ENCODE measurements at regions of chr3 and their contacts with region 1.

Region 1: GRCh38 chr3:105798381-105798934 is 70.4 kb downstream of the CBLB start:
- DNase-seq: no peak
- ATAC-seq: peak; percentile 77
- H3K4me3 Mint-ChIP-seq: peak overlapping the region; percentile 55
- H3K27ac Mint-ChIP-seq: peak overlapping the region; percentile 81
- H3K4me1 Mint-ChIP-seq: peaks cover 73% of the 10 kb centered on the region
- H3K27me3 Mint-ChIP-seq: no peaks in the 10 kb centered on the region
- CTCF ChIP-seq: no peak

Region 2: DNA sequence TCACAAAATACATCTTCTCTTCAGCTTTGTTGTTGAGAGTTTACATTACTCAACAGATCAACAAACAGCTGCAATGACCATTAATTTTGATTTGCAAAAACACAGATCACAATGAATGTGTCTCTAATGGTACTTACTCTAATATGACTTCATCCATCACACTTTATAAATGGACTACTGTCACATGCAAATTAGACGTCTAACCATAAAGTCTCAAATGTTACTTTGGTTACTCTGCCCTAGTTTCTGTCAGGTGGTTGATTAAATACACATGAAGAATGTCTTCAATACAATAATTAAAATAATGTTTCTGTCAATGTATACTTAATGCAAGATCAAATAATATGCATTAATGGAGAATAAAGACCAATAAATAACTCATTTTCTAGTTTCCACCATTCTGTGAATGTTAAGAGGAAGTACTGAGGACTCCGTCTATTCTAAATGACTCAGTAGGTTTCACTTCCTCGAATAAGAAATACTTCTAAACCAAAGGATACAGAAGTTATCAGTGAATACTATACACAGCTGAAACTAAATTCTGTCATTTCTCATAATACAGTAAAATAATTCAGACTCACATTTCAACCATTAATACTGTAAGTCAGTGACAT is 75.4 kb before region 1 on chr3:
- CTCF ChIA-PET with region 1: no interaction called
- POLR2A ChIA-PET with region 1: no interaction called
- intact Hi-C with region 1: loop called (anchors 1 kb)
- DNase-seq: no peak
- ATAC-seq: peak; percentile 93
- H3K4me3 Mint-ChIP-seq: peak overlapping the region; percentile 66
- H3K27ac Mint-ChIP-seq: peak overlapping the region; percentile 88
- H3K4me1 Mint-ChIP-seq: peaks cover 19% of the 10 kb centered on the region
- H3K27me3 Mint-ChIP-seq: no peaks in the 10 kb centered on the region
- CTCF ChIP-seq: no peak

Region 3: DNA sequence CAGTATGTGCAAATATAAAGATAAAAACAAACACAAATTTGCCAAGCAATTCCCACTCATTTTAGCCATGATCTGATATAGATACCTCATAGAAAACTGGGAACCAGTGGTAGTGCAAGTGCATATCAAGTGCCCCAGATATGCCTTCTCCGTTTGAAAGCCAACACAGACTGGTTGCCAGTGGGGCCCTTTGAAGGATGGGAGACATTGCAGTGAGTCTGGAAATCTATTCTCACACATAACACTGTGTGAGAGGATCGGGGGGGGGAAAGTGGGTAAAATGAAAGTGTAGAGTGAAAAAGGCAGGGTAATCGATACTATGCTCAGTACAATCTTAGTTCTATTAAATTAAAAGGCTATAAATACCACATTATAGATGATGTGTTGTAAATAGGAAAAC is 12.7 kb before region 1 on chr3:
- CTCF ChIA-PET with region 1: no interaction called
- POLR2A ChIA-PET with region 1: interaction called, 4 read pairs
- intact Hi-C with region 1: loop called (anchors 2 kb)
- DNase-seq: no peak
- ATAC-seq: no peak
- H3K4me3 Mint-ChIP-seq: no peak overlapping the region
- H3K27ac Mint-ChIP-seq: no peak overlapping the region
- H3K4me1 Mint-ChIP-seq: peaks cover 20% of the 10 kb centered on the region
- H3K27me3 Mint-ChIP-seq: no peaks in the 10 kb centered on the region
- CTCF ChIP-seq: no peak

Region 4: GRCh38 chr3:105836533-105836932 is 38.1 kb after region 1 on chr3:
- CTCF ChIA-PET with region 1: interaction called, 5 read pairs
- POLR2A ChIA-PET with region 1: interaction called, 22 read pairs
- intact Hi-C with region 1: loop called (anchors 1 kb)
- DNase-seq: no peak
- ATAC-seq: no peak
- H3K4me3 Mint-ChIP-seq: peak overlapping the region; percentile 72
- H3K27ac Mint-ChIP-seq: peak overlapping the region; percentile 82
- H3K4me1 Mint-ChIP-seq: peaks cover 63% of the 10 kb centered on the region
- H3K27me3 Mint-ChIP-seq: no peaks in the 10 kb centered on the region
- CTCF ChIP-seq: no peak

Region 5: DNA sequence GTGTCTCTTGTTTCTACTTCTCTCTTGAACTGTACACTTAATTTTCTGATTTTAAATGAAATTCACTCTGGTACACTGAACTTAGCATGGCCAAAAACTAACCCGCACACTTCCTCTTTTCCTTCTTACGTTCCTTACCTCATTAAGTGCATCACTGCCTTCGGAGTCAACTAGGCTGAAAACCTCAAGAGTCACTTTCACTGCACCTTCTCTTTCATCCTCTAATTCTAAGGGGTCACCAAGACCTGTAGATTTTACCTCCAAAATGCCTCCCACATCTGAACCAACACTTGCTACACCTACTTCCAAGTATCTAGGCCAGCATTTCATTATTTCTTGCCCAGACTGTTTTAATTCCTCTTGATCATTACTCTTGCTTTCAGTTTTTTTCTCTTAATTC is 63.8 kb after region 1 on chr3:
- CTCF ChIA-PET with region 1: no interaction called
- POLR2A ChIA-PET with region 1: interaction called, 18 read pairs
- intact Hi-C with region 1: loop called (anchors 1 kb)
- DNase-seq: no peak
- ATAC-seq: peak; percentile 94
- H3K4me3 Mint-ChIP-seq: no peak overlapping the region
- H3K27ac Mint-ChIP-seq: no peak overlapping the region
- H3K4me1 Mint-ChIP-seq: peaks cover 50% of the 10 kb centered on the region
- H3K27me3 Mint-ChIP-seq: no peaks in the 10 kb centered on the region
- CTCF ChIP-seq: no peak

Measured in activated B cell treated with CpG ODN at 0.5 μM for 24 hours (primary cell).